Activated naive CD4-positive, alpha-beta T cell treated with anti-CD3 and anti-CD28 coated beads for 36 hours (primary cell): ENCODE measurements at regions of chr5 and their contacts with region 1.

Region 1: GRCh38 chr5:95870105-95870672 is 47.7 kb upstream of the GLRX start:
- DNase-seq: peak; percentile 65
- H3K4me3 Mint-ChIP-seq: peak overlapping the region; percentile 68
- H3K27ac Mint-ChIP-seq: peak overlapping the region; percentile 99
- H3K4me1 Mint-ChIP-seq: peaks cover 59% of the 10 kb centered on the region
- H3K27me3 Mint-ChIP-seq: no peaks in the 10 kb centered on the region

Region 2: GRCh38 chr5:95760273-95761191 is 109.7 kb before region 1 on chr5:
- CTCF ChIA-PET with region 1: no interaction called
- intact Hi-C with region 1: loop called (anchors 1 kb)
- DNase-seq: peak; percentile 48
- H3K4me3 Mint-ChIP-seq: peak overlapping the region; percentile 36
- H3K27ac Mint-ChIP-seq: peak overlapping the region; percentile 47
- H3K4me1 Mint-ChIP-seq: peaks cover 26% of the 10 kb centered on the region
- H3K27me3 Mint-ChIP-seq: no peaks in the 10 kb centered on the region

Region 3: GRCh38 chr5:95835682-95836385 is 34.4 kb before region 1 on chr5:
- CTCF ChIA-PET with region 1: no interaction called
- intact Hi-C with region 1: loop called (anchors 1 kb)
- DNase-seq: peak; percentile 57
- H3K4me3 Mint-ChIP-seq: peak overlapping the region; percentile 77
- H3K27ac Mint-ChIP-seq: peak overlapping the region; percentile 92
- H3K4me1 Mint-ChIP-seq: peaks cover 47% of the 10 kb centered on the region
- H3K27me3 Mint-ChIP-seq: no peaks in the 10 kb centered on the region

Region 4: DNA sequence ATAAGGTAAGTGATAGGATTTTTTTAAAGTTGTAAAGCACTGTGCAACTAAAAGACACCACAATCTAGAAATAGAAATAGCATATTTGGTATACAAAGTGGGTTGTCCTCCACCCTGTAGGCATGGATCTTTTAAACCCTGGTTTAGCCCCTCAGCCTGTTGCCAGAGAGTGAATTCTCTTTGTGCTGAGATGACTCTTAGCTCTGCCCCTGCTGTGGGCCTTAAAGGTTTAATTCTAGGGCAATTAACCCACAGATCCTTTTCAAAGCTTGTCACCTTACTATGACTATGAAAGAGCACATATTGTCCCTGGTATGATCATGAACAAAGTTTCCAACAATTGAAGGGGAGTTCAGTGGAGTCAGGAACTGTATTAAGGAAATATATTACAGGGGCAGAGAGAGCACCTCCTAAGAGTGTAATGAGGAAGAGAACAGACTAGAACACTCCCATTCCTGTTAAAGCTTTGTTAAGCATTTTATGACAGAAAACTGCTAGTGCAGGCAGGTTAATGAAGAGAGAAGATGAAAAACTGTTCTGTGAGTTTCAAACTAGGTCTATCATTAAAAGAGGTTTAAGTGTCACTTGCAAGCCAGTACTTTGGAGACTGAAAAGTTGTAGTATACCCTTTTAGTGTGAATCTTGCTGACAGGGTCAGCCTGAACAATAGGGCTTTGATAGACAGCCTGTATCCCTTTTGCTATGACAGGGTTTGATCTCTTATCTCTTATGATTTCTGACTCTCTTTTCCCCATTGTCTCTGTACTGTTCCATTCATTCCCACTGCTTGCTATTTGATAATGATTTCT is 195.6 kb after region 1 on chr5:
- CTCF ChIA-PET with region 1: interaction called, 3 read pairs
- intact Hi-C with region 1: loop called (anchors 1 kb)
- DNase-seq: peak; percentile 37
- H3K4me3 Mint-ChIP-seq: no peak overlapping the region
- H3K27ac Mint-ChIP-seq: peak overlapping the region; percentile 59
- H3K4me1 Mint-ChIP-seq: peaks cover 31% of the 10 kb centered on the region
- H3K27me3 Mint-ChIP-seq: no peaks in the 10 kb centered on the region

Region 5: GRCh38 chr5:96113170-96113939 is 243.2 kb after region 1 on chr5:
- CTCF ChIA-PET with region 1: no interaction called
- intact Hi-C with region 1: loop called (anchors 1 kb)
- DNase-seq: peak; percentile 19
- H3K4me3 Mint-ChIP-seq: no peak overlapping the region
- H3K27ac Mint-ChIP-seq: peak overlapping the region; percentile 77
- H3K4me1 Mint-ChIP-seq: peaks cover 28% of the 10 kb centered on the region
- H3K27me3 Mint-ChIP-seq: peaks cover 4% of the 10 kb centered on the region

Region 6: DNA sequence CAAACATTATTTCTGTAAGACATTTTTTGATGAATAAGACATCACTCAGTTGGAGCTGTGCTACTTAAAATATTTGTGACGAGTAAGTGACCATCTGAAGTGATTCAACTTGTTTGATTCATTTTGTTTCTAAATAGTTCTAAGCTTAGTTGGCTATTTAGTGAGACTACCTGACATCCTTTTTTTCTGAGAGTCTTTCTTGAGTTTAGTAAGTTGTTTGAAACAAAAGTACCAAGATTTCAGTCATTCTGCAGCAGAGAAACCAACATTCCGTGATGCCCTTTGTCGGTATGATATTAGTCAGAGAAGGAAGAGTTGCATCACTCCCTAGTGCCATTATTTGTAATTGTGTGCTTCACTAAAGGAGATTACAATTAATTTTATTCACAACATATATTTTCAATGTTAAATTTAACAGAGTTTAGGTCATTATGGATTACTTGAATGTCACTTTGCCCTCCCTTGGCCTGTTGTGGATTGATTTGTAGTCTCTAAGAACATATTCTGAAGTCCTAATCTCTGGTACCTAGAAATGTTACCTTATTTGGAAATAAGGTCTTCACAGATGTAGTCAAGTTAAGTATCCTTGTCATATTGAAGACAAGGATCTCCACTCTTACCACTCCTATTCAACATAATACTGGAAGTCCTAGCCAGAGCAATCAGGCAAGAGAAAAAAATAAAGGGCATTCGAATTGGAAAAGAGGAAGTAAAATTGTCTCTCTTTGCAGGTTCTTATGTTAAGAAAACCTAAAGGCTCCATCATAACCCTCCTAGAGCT is 350.6 kb after region 1 on chr5:
- CTCF ChIA-PET with region 1: no interaction called
- intact Hi-C with region 1: loop called (anchors 1 kb)
- DNase-seq: peak; percentile 22
- H3K4me3 Mint-ChIP-seq: no peak overlapping the region
- H3K27ac Mint-ChIP-seq: no peak overlapping the region
- H3K4me1 Mint-ChIP-seq: peaks cover 11% of the 10 kb centered on the region
- H3K27me3 Mint-ChIP-seq: peaks cover 16% of the 10 kb centered on the region

Region 7: DNA sequence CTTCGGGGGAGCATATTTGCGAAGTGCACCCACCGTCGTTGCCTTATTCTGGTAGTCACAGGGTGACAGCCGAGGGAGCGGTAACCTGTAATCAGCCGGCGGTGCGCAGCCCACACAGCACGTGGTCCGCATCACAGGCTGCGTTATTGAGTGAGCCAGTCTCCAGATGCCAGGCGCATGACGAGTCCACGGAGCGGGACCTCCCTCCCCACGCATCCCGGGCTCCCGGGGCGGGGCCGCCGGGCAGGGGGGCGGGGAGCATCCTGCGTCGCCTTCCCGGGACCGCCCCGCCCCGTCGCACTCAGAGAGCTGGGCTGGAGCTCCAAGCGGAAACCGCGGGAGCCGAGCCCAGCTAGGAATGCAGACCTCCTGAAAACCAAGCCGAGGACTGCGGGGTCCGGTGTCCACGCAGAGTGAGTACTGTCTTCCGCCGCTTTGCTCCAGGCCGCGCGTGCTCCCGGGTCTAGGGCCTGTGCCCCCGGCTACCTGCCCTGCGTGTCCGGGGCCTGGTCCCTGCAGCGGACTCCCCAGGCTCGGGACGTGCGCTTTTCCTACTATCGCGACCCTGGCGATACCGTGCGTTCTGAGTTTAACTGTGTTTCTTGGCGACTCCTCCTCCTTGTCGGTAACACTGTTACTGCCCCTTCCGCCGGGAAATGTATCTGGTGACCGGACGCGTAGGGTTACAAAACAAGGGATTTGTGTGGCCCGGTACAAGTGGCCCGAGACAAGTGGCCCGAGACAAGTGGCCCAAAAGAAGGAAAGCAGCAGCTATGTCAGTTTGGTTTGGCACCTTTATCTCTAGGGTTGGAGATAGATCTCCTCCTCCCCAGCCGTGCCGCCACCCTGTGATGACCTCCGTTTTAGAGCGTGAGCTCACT is 832.6 kb after region 1 on chr5:
- CTCF ChIA-PET with region 1: no interaction called
- intact Hi-C with region 1: loop called (anchors 2 kb)
- DNase-seq: peak; percentile 89
- H3K4me3 Mint-ChIP-seq: peak overlapping the region; percentile 87
- H3K27ac Mint-ChIP-seq: peak overlapping the region; percentile 88
- H3K4me1 Mint-ChIP-seq: peaks cover 47% of the 10 kb centered on the region
- H3K27me3 Mint-ChIP-seq: no peaks in the 10 kb centered on the region